HepG2 (cell line): ENCODE measurements at regions of chr5 and their contacts with region 1.

Region 1: DNA sequence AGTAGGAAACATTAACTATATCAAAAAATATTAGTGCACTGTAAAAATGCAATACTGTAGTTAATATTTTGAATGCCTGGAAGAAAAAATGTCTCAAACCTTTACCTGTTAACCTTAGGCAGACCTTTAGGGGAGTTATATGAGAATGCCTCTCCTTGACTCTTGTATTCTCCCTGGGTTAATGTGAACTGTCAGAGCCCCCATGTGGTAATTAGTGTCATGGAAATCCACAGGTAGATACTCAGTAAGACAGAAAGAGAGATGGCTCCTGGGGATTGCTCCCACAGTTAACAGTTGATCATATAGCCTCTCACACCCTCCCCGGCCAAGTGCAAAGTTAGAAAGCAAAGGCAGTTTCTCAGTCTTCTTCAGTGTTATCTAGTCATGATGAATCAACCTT is 742.8 kb downstream of the NR2F1-AS1 start:
- DNase-seq: peak; percentile 37
- ATAC-seq: peak; percentile 87
- H3K4me3 ChIP-seq: no peak overlapping the region
- H3K27ac ChIP-seq: no peak overlapping the region
- H3K4me1 ChIP-seq: no peaks in the 10 kb centered on the region
- H3K27me3 ChIP-seq: no peaks in the 10 kb centered on the region; a peak in 1 of 5 replicates
- CTCF ChIP-seq: peak; percentile 51
- EP300 ChIP-seq: no peak
- POLR2A ChIP-seq: no peak
- RAD21 ChIP-seq: no peak

Region 2: GRCh38 chr5:91494447-91494996 is 1343.7 kb before region 1 on chr5:
- CTCF ChIA-PET with region 1: no interaction called
- POLR2A ChIA-PET with region 1: no interaction called
- in situ Hi-C with region 1: no loop called
- intact Hi-C with region 1: no loop called
- DNase-seq: no peak
- ATAC-seq: no peak
- H3K4me3 ChIP-seq: no peak overlapping the region
- H3K27ac ChIP-seq: no peak overlapping the region
- H3K4me1 ChIP-seq: no peaks in the 10 kb centered on the region
- H3K27me3 ChIP-seq: no peaks in the 10 kb centered on the region
- CTCF ChIP-seq: no peak
- EP300 ChIP-seq: no peak
- POLR2A ChIP-seq: no peak
- RAD21 ChIP-seq: no peak

Region 3: GRCh38 chr5:91635950-91636734 is 1202.1 kb before region 1 on chr5:
- CTCF ChIA-PET with region 1: no interaction called
- POLR2A ChIA-PET with region 1: no interaction called
- in situ Hi-C with region 1: no loop called
- intact Hi-C with region 1: loop called (anchors 5 kb)
- DNase-seq: no peak
- ATAC-seq: no peak
- H3K4me3 ChIP-seq: no peak overlapping the region
- H3K27ac ChIP-seq: no peak overlapping the region
- H3K4me1 ChIP-seq: no peaks in the 10 kb centered on the region
- H3K27me3 ChIP-seq: no peaks in the 10 kb centered on the region
- CTCF ChIP-seq: no peak
- EP300 ChIP-seq: no peak
- POLR2A ChIP-seq: no peak
- RAD21 ChIP-seq: no peak

Region 4: DNA sequence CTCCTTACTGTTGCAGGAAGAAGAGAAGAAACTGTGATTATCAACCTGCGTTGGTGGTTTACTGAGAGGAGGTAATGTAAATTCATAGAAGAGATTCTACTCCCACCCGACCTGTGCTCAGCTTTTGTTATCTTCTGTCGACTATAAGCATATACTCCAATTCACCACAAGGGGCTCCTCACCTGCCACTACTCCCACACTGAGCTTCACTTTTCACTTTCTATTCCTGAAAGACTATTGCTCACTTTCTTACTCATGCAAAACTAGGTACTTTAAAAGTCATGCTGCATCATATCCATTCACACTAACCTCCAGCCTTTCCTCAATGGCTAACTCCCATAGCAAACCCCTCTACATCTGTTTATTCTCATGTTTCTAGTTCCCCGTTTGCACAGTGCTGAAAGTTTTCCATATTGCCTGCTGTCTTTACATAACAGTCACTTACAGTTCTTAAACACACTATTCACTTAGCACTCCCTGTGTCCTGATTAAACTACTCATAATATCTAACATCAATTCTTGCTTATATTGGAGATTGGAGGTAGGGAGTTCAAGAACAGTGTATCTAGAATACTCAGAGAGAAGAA is 319.8 kb before region 1 on chr5:
- CTCF ChIA-PET with region 1: interaction called, 3 read pairs
- POLR2A ChIA-PET with region 1: no interaction called
- in situ Hi-C with region 1: no loop called
- intact Hi-C with region 1: loop called (anchors 1 kb)
- DNase-seq: peak; percentile 12
- ATAC-seq: peak; percentile 98
- H3K4me3 ChIP-seq: no peak overlapping the region
- H3K27ac ChIP-seq: no peak overlapping the region
- H3K4me1 ChIP-seq: no peaks in the 10 kb centered on the region
- H3K27me3 ChIP-seq: no peaks in the 10 kb centered on the region
- CTCF ChIP-seq: peak; percentile 65
- EP300 ChIP-seq: no peak
- POLR2A ChIP-seq: no peak
- RAD21 ChIP-seq: no peak

Region 5: GRCh38 chr5:92687821-92688722 is 150.2 kb before region 1 on chr5:
- CTCF ChIA-PET with region 1: no interaction called
- POLR2A ChIA-PET with region 1: no interaction called
- in situ Hi-C with region 1: no loop called
- intact Hi-C with region 1: loop called (anchors 5 kb)
- DNase-seq: peak; percentile 43
- ATAC-seq: peak; percentile 90
- H3K4me3 ChIP-seq: no peak overlapping the region
- H3K27ac ChIP-seq: no peak overlapping the region
- H3K4me1 ChIP-seq: no peaks in the 10 kb centered on the region
- H3K27me3 ChIP-seq: no peaks in the 10 kb centered on the region
- CTCF ChIP-seq: peak; percentile 65
- EP300 ChIP-seq: no peak
- POLR2A ChIP-seq: no peak
- RAD21 ChIP-seq: no peak